Activated CD4-positive, alpha-beta memory T cell treated with anti-CD3 and anti-CD28 coated beads, Interleukin-2, amount 10 ng/mL, durations not matched to agents 7 days and 5 days (primary cell): ENCODE measurements at regions of chr7 and their contacts with region 1.

Region 1: DNA sequence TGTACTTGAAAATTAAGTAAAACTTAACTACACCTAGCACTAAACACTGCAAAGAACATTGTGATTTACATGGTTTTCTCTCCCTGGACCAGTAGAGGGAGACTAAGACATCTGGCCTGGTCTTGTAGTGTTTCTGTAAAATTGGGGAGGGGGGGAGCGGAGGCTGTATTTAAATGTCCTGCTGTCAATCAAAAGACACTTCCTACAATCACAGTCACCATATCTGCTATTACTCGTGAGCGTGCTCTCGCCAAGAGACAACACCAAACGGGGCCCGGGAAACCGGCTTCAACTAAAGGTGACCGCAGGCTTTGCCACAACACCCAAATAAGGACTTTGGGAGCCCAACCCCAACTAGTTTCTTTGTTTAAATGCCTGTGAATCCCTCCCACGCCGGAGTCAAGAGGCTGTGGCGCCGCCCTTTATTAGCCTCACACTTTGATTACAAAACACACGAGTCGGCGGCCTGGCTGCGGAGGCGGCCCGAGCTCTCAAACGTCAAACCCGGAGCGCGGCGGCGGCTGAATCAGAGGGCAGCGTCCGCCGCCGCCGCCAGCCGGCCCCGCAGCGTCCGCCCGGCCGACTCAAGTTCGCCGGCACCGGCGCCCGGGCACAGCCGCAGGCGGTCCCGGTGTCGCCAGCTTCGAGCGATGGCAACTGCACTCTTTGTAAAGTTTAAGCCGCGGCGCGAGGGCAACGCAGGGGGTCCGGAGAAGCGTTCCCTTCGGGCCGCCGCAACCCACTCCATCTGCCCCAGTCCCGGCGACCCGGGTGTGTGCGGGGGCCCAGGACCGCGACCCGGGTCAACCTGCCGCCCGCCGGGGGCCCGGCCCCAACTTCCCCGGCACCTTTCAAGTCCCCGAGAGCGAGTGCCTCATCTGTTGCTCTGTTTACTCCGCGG is 1.3 kb downstream of the KDM7A start:
- DNase-seq: peak; percentile 96
- H3K4me3 Mint-ChIP-seq: peak overlapping the region; percentile 84
- H3K27ac Mint-ChIP-seq: peak overlapping the region; percentile 89
- H3K4me1 Mint-ChIP-seq: peaks cover 51% of the 10 kb centered on the region
- H3K27me3 Mint-ChIP-seq: peaks cover 14% of the 10 kb centered on the region

Region 2: GRCh38 chr7:140192620-140193019 is 17.1 kb after region 1 on chr7:
- CTCF ChIA-PET with region 1: no interaction called
- POLR2A ChIA-PET with region 1: interaction called, 21 read pairs
- DNase-seq: no peak
- H3K4me3 Mint-ChIP-seq: no peak overlapping the region
- H3K27ac Mint-ChIP-seq: no peak overlapping the region
- H3K4me1 Mint-ChIP-seq: peaks cover 29% of the 10 kb centered on the region
- H3K27me3 Mint-ChIP-seq: peaks cover 5% of the 10 kb centered on the region

Region 3: GRCh38 chr7:140222814-140223213 is 47.3 kb after region 1 on chr7:
- CTCF ChIA-PET with region 1: interaction called, 3 read pairs
- POLR2A ChIA-PET with region 1: interaction called, 178 read pairs
- DNase-seq: no peak
- H3K4me3 Mint-ChIP-seq: no peak overlapping the region
- H3K27ac Mint-ChIP-seq: peak overlapping the region; percentile 87
- H3K4me1 Mint-ChIP-seq: peaks cover 46% of the 10 kb centered on the region
- H3K27me3 Mint-ChIP-seq: no peaks in the 10 kb centered on the region

Region 4: GRCh38 chr7:140242057-140243031 is 66.9 kb after region 1 on chr7:
- CTCF ChIA-PET with region 1: no interaction called
- POLR2A ChIA-PET with region 1: interaction called, 10 read pairs
- DNase-seq: no peak
- H3K4me3 Mint-ChIP-seq: no peak overlapping the region
- H3K27ac Mint-ChIP-seq: peak overlapping the region; percentile 8
- H3K4me1 Mint-ChIP-seq: peaks cover 20% of the 10 kb centered on the region
- H3K27me3 Mint-ChIP-seq: no peaks in the 10 kb centered on the region

Region 5: DNA sequence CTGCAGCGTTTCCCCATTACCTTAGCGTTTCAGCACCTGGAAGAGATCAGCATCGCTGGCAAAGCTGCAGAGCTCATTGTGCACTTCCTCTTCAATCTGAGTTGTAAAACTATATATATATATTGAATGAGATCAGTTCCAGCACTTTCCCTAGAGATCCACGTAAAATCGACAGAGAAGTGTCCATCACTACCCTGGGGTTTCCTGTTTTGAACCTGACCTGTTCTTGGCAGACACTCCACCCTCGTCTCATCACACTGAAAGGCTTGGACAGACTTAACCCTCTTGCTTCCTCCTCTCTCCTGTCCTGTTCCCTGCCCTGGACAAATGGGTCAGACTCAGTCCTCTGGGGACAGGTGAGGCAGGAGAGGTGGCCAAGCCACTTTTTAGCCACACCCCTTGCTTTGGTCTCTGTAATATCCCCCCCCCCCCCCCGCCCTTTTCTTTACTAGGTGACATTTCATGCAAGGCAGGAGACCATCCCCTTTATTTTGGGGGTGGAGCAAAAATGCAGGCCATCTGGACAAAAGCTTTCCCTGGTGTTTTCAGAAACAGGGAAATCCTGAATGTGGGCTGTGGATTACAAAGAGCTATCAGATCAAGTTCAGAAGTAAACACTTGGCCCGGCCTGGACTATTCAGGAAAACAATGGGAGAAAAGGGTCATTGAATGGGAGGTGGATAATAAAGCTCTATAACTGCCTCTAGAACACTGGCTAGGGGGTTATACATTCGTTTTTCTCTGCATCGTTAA is 85.1 kb after region 1 on chr7:
- CTCF ChIA-PET with region 1: interaction called, 10 read pairs
- POLR2A ChIA-PET with region 1: interaction called, 92 read pairs
- DNase-seq: no peak
- H3K4me3 Mint-ChIP-seq: no peak overlapping the region
- H3K27ac Mint-ChIP-seq: no peak overlapping the region
- H3K4me1 Mint-ChIP-seq: peaks cover 51% of the 10 kb centered on the region
- H3K27me3 Mint-ChIP-seq: no peaks in the 10 kb centered on the region

Region 6: GRCh38 chr7:140375892-140376730 is 200.6 kb after region 1 on chr7:
- CTCF ChIA-PET with region 1: no interaction called
- POLR2A ChIA-PET with region 1: interaction called, 10 read pairs
- DNase-seq: peak; percentile 33
- H3K4me3 Mint-ChIP-seq: peak overlapping the region; percentile 77
- H3K27ac Mint-ChIP-seq: peak overlapping the region; percentile 99
- H3K4me1 Mint-ChIP-seq: peaks cover 47% of the 10 kb centered on the region
- H3K27me3 Mint-ChIP-seq: no peaks in the 10 kb centered on the region